MCF 10A (cell line): ENCODE measurements at regions of chr1 and their contacts with region 1.

Region 1: DNA sequence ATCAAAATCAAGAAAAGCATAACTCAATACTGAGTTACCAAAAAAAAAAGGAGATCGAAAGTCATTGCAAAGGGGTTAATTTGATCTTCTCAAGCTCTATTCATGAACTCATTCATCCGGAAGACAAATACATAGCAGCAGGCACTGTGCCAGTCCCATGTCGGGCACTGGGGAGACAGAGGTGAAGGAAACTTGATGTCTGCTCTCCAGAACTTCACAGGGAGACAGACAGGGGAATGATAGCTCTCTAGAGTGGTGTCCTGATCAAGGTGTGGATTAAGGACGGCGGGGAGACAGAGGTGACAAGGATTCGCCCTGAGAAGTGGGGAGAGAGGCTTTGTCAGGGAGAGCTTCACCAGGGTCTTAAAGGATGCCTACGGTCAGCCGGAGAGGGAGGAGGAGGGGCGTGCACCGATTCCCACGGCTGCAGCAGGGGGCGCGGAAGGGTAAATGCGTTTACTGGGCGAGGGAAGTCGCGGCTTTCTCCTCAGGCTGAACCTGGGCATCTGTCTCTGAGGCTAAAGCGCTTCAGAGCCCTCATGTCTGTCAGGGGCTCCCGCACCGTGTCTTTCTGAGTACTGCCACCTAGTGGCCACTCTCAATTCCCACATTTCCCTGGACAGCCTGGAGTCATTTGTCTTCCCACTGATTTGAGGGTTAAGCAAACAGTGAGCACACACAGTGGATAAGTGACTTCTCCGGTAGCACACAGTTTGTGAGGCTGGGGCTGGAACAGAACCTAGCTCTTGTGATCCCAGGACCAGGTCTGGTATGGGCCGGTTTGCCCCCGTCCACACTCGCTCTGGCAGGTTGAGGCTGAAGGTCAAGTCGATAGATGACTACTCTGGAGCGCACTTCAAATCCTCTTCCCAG is 152.8 kb downstream of the TENT5C start:
- DNase-seq: peak; percentile 83
- H3K4me3 Mint-ChIP-seq: peak overlapping the region; percentile 76
- H3K27ac Mint-ChIP-seq: no peak overlapping the region
- H3K4me1 Mint-ChIP-seq: peaks cover 11% of the 10 kb centered on the region
- H3K27me3 Mint-ChIP-seq: no peaks in the 10 kb centered on the region
- CTCF ChIP-seq: peak; percentile 84

Region 2: DNA sequence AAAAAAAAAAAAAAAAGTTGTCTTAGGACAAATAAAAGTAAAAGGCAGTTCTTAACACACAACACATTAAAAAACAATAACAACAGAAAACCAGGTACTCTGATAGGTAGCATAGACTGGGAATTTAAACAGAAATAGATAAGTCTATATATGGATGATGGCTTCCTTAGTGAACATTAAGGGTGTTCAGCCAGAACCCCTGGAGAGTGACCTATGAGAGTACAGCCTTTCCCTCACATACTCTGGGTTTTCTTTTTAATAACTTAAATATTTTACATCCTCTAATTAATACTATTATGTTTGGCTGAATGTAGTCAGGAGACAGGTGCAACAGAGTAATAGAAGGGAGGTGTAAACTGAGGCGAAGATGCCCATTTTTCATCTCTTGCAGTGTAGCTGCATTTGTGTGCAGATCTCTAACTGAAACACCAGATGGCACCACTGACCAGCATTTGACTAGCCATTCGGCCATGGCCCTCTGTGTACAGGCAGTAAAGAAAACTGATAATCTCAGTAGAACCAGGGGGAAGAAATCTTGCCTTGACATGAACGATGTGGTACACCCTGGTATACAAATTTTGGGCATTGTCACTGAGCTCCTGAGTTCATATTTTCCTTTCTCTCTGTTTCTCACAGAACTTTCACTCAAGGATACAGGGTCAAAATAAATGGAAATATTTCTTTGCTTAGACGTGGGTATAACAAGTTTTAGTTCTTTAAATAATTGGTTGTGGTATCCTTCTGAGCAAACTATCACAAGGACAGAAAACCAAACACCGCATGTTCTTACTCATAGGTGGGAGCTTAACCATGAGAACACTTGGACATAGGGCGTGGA is 690.9 kb before region 1 on chr1:
- CTCF ChIA-PET with region 1: interaction called, 7 read pairs
- POLR2A ChIA-PET with region 1: no interaction called
- intact Hi-C with region 1: loop called (anchors 5 kb)
- DNase-seq: peak; percentile 66
- H3K4me3 Mint-ChIP-seq: no peak overlapping the region
- H3K27ac Mint-ChIP-seq: no peak overlapping the region
- H3K4me1 Mint-ChIP-seq: peaks cover 7% of the 10 kb centered on the region
- H3K27me3 Mint-ChIP-seq: no peaks in the 10 kb centered on the region
- CTCF ChIP-seq: peak; percentile 82

Region 3: GRCh38 chr1:117527566-117528102 is 231.0 kb before region 1 on chr1:
- CTCF ChIA-PET with region 1: interaction called, 395 read pairs
- POLR2A ChIA-PET with region 1: interaction called, 3 read pairs
- intact Hi-C with region 1: no loop called
- DNase-seq: no peak
- H3K4me3 Mint-ChIP-seq: no peak overlapping the region
- H3K27ac Mint-ChIP-seq: no peak overlapping the region
- H3K4me1 Mint-ChIP-seq: no peaks in the 10 kb centered on the region
- H3K27me3 Mint-ChIP-seq: no peaks in the 10 kb centered on the region
- CTCF ChIP-seq: no peak

Region 4: DNA sequence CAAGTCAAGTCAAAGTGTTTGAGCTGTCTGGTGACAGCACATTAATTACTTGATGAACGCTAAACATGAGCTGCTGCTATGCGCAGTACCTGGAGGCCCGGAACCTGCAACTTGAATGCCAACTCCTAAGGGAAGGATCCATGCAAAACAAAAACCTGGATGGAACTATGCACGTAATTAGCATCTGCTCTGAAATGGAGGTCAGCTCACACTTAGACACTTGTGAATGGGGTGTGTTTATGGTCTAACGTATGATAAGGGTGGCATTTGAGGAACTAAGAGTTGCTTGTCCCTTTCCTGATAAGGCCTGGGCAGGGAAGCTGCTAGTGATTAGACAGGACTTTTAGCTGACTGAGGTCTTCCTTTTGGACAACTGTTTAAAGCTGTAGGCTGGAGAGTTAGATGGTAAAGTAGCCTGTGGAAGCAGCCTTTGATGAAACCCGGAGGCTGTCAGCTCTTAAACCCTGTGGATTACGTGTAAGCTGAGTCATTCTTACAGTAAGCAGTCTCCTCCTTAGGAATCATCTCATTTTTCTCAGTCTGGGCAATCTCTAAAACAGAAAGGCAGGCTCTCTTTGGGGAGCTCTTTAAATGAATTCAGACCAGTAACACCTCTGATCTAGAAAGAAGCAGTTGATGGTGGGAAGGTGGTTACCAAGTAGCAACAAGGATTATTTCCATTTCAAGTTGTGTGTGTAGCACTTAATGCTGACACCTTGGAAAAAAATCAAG is 146.0 kb before region 1 on chr1:
- CTCF ChIA-PET with region 1: interaction called, 29 read pairs
- POLR2A ChIA-PET with region 1: no interaction called
- intact Hi-C with region 1: no loop called
- DNase-seq: peak; percentile 69
- H3K4me3 Mint-ChIP-seq: no peak overlapping the region
- H3K27ac Mint-ChIP-seq: no peak overlapping the region
- H3K4me1 Mint-ChIP-seq: peaks cover 16% of the 10 kb centered on the region
- H3K27me3 Mint-ChIP-seq: peaks cover 15% of the 10 kb centered on the region
- CTCF ChIP-seq: no peak

Region 5: GRCh38 chr1:117740496-117740895 is 18.2 kb before region 1 on chr1:
- CTCF ChIA-PET with region 1: interaction called, 19 read pairs
- POLR2A ChIA-PET with region 1: no interaction called
- intact Hi-C with region 1: no loop called
- DNase-seq: no peak
- H3K4me3 Mint-ChIP-seq: no peak overlapping the region
- H3K27ac Mint-ChIP-seq: no peak overlapping the region
- H3K4me1 Mint-ChIP-seq: peaks cover 1% of the 10 kb centered on the region
- H3K27me3 Mint-ChIP-seq: peaks cover 12% of the 10 kb centered on the region
- CTCF ChIP-seq: no peak

Region 6: GRCh38 chr1:117815926-117816325 is 57.2 kb after region 1 on chr1:
- CTCF ChIA-PET with region 1: interaction called, 15 read pairs
- POLR2A ChIA-PET with region 1: no interaction called
- intact Hi-C with region 1: no loop called
- DNase-seq: no peak
- H3K4me3 Mint-ChIP-seq: no peak overlapping the region
- H3K27ac Mint-ChIP-seq: no peak overlapping the region
- H3K4me1 Mint-ChIP-seq: no peaks in the 10 kb centered on the region
- H3K27me3 Mint-ChIP-seq: peaks cover 1% of the 10 kb centered on the region
- CTCF ChIP-seq: no peak

Region 7: GRCh38 chr1:117905020-117905419 is 146.3 kb after region 1 on chr1:
- CTCF ChIA-PET with region 1: no interaction called
- POLR2A ChIA-PET with region 1: no interaction called
- intact Hi-C with region 1: no loop called
- DNase-seq: no peak
- H3K4me3 Mint-ChIP-seq: no peak overlapping the region
- H3K27ac Mint-ChIP-seq: no peak overlapping the region
- H3K4me1 Mint-ChIP-seq: no peaks in the 10 kb centered on the region
- H3K27me3 Mint-ChIP-seq: no peaks in the 10 kb centered on the region
- CTCF ChIP-seq: no peak

Region 8: DNA sequence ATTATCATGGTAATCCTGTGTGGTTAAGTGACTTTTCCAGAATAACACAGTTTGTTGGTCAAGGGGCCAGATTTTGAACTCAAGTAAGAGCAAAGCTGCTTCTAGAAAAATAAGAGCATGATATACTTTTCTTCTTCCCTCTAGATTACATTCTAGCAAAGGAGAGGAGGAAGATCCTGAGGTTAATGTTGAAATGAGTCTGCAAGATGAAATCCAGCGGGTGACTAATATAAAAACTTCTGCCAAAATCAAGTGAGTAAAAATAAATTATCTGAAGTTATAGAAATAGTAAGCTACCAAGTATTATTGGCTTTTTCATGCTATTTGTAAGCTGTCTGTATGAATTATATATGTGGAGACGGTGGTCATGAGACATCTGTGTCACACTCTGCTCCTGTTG is 183.6 kb after region 1 on chr1:
- CTCF ChIA-PET with region 1: no interaction called
- POLR2A ChIA-PET with region 1: no interaction called
- intact Hi-C with region 1: no loop called
- DNase-seq: no peak
- H3K4me3 Mint-ChIP-seq: no peak overlapping the region
- H3K27ac Mint-ChIP-seq: no peak overlapping the region
- H3K4me1 Mint-ChIP-seq: no peaks in the 10 kb centered on the region
- H3K27me3 Mint-ChIP-seq: no peaks in the 10 kb centered on the region
- CTCF ChIP-seq: no peak